ENCODE measurements at regions of chr7 and their contacts with region 1.

Region 1: GRCh38 chr7:56074371-56074791 is 10.3 kb downstream of the SUMF2 start:
- DNase-seq: peak; percentile 94

Region 2: DNA sequence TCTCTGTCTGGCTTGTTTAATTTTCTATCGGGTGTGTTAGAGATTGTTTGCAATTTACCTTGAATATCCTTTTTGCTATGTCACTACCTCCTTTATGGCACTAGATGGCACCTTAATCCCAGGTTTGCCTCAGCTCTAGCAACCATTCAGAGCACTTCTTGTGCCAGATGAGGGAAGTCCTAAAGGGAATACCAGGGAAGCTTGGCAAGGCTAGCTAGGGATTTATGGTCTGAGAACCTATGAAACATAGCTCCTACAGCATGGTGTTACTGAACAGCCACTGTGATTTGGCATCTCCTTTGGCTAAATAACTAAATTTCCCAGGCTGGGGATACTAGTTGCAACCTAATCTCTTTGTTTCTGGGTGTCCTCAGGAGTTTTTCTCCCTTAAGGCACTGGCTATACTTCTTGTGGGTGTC is 433.1 kb before region 1 on chr7:
- intact Hi-C with region 1: loop called (anchors 1 kb)
- DNase-seq: no peak

Region 3: DNA sequence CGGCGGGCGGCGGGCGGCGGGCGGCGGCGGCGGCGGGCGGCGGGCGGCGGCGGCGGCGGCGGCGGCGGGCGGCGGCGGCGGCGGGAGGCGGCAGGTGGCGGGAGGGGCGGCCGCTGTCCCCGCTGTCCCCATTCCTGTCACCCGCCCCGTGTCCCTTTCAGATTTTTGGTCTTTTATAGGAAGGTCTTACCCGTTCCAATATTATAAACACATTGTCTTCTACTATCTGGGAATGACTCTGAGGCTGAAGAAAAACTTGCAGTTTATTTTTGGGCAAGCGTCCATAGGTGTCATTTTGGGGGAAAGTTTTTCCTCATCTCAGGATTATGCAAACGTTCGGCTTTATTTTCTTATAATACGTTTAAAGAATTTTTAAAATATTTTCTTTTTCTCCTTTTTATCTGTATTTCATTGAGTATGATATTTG is 186.5 kb before region 1 on chr7:
- intact Hi-C with region 1: loop called (anchors 10 kb)
- DNase-seq: no peak

Region 4: DNA sequence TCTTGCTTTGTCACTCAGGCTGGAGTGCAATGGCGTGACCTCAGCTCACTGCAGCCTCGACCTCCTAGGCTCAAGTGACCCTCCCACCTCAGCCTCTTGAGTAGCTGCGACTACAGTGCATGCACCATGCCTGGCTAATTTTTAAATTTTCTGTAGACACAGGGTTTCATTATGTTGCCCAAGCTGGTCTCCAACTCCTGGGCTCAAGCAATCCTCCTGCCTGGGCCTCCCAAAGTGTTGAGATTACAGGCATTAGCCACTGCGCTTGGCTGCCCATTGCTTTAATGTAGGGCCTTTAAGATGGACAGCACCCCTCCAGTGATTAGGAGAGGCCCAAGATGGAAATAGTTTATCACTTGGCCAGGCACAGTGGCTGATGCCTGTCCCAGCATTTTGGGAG is 70.6 kb before region 1 on chr7:
- intact Hi-C with region 1: loop called (anchors 2 kb)
- DNase-seq: no peak

Region 5: GRCh38 chr7:56019501-56019900 is 54.9 kb before region 1 on chr7:
- intact Hi-C with region 1: no loop called
- DNase-seq: no peak